WTC11 (cell line): ENCODE measurements at regions of chr1 and their contacts with region 1.

Region 1: DNA sequence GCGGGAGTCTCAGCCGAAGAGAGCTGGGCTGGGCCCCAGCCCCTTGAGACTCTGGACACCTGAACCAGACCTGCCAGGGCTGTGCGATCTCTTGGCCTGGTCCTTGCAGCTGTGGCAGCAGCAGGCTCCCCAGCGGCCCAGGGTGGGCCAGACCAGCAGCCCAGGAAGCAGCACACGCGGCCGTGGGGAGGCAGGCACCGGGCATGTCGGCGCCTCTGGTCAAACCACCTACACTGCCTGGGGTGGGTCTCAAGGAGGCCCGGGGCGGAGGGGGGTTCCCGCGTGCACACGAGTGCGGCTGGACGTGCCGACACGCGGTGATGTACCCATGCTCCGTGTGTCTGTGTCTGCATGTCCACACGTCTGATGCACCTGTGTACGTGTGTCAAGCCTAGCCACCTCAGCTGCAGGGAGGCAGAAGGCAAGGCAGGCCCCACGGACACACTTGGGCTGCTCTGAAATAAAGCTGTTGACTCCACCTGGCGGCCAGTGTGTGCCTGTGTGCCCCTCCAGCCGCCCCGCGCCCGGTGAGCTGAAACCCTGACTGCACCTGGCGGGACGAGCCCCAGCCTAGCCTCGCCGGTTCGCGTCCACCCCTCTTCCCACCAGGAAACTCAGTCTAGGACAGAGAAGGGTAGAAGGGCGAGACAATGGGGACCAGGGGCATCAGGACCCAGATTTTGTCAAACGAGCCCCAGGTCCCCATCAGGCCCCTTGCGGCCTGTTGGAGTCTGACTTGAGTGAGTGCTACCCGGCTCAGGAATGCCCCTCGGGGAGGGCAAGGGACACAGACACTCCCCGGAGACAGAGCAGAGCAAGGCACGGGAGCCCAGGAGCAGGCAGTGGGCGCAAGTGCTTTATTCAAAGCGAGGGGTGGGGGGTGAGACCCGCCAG is 11.6 kb downstream of the SCNN1D start:
- DNase-seq: peak; percentile 85
- ATAC-seq: peak; percentile 68
- H3K4me3 Mint-ChIP-seq: no peak overlapping the region
- H3K27ac Mint-ChIP-seq: peak overlapping the region; percentile 49; the same call in 1 of the 2 replicates
- H3K4me1 Mint-ChIP-seq: peaks cover 4% of the 10 kb centered on the region; the same call in 1 of the 2 replicates
- H3K27me3 Mint-ChIP-seq: no peaks in the 10 kb centered on the region
- CTCF ChIP-seq: peak; percentile 55

Region 2: DNA sequence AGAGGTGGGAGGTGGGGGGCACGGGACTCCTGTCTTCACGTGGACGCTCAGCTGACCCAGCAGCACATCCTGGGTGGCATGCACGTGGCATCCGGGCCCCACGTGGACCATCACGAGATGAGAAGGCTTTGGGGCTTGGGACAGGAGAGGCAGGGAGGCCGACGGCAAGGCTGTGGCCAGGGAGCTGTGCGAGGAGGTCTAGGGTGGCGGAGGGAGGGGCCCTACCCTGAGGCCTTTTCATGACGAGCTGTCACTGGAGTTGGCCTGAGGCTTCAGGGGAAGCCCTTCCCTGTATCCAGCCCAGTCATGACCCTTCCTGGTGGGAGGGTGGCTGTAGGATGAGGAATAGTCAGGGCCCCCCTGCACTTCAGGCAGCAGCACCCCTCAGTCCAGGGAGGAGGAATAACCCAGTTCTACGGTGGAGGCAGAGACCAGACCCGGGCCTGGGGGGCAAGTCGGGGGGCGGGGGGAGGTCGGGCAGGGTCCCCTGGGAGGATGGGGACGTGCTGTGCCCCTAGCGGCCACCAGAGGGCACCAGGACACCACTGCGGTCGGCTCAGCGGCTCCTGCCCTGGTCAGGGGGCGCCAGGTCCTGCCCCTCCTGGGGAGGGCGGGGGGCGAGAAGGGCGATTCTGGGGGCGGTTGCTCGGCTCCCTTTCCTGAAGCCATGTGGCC is 307.9 kb before region 1 on chr1:
- CTCF ChIA-PET with region 1: interaction called, 13 read pairs
- POLR2A ChIA-PET with region 1: no interaction called
- DNase-seq: peak; percentile 85
- ATAC-seq: peak; percentile 92
- H3K4me3 Mint-ChIP-seq: no peak overlapping the region
- H3K27ac Mint-ChIP-seq: no peak overlapping the region
- H3K4me1 Mint-ChIP-seq: no peaks in the 10 kb centered on the region
- H3K27me3 Mint-ChIP-seq: peaks cover 59% of the 10 kb centered on the region
- CTCF ChIP-seq: peak; percentile 98

Region 3: DNA sequence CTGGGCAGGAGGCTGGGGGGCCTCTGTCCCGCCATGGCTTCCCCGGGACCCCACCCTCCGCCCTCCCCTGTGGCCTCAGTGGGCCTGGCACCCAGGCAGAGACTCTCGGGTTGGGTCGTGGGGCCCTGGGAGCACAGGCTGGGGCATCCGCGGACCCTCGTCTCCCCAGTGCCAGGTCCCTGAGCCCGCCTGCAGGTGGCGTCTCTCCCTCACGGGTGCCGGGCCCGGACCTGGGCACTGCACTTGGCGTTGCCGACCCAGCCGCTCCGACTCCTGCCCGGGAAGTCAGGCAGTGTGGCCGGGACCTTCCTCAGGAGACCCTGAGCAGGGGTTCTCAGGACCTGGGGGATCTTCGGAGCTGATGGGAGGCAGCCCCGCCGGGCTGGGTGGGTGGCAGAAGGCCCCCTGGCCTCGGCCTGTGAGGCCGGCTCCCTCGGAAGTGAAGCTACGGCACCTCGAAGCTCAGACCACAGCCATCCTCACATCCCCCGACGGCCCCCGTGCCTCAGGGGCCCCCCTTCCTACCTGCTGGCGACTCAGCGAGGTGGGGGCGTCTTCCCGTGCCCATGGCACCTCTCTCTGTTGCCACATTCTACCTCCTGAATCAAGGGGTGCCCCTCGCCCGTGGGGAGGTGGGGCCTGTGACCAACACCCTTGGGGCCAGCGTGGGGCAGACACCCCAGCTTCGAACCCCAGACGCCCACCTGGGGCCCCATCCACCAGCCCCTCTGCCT is 169.6 kb before region 1 on chr1:
- CTCF ChIA-PET with region 1: interaction called, 20 read pairs
- POLR2A ChIA-PET with region 1: no interaction called
- DNase-seq: peak; percentile 89
- ATAC-seq: peak; percentile 96
- H3K4me3 Mint-ChIP-seq: no peak overlapping the region
- H3K27ac Mint-ChIP-seq: no peak overlapping the region
- H3K4me1 Mint-ChIP-seq: no peaks in the 10 kb centered on the region
- H3K27me3 Mint-ChIP-seq: peaks cover 24% of the 10 kb centered on the region
- CTCF ChIP-seq: peak; percentile 58

Region 4: DNA sequence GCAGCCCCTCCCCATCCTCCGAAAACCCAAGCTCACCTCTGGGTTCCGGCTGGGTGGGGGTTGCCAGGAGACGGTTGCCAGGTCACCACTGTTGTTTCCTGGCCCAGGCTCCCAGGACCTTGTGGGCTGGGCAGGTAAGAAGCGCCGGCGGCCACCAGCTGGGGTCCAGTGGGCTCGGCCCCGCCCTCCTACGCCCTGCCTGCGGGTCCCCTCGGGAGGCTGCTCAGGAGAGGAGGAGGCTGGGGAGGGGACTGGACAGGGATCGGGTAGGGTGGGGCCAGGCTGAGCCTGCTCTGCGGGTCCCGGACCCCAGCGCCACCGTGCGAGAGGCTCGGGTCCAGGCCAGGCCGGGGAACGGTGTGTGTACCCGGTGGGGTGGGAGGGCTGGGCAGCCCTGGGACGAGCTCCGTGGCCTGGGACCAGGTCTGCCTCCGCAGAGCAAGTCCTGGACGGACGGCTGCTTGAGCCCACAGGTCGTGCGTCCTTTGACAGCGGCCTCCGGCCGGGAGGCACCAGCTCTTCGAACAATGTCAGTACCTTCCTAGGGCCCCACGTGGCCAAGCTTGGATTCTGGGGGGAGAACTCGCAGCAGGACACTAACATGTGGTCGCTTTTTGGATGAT is 117.9 kb before region 1 on chr1 and contains the start of gene TTLL10:
- CTCF ChIA-PET with region 1: interaction called, 10 read pairs
- POLR2A ChIA-PET with region 1: no interaction called
- DNase-seq: peak; percentile 82
- ATAC-seq: peak; percentile 72
- H3K4me3 Mint-ChIP-seq: peak within 1 kb of the TSS; percentile 40; the same call in 1 of the 2 replicates
- H3K27ac Mint-ChIP-seq: no peak within 1 kb of the TSS
- H3K4me1 Mint-ChIP-seq: peaks cover 20% of the 10 kb centered on the region
- H3K27me3 Mint-ChIP-seq: peaks cover 19% of the 10 kb centered on the region
- CTCF ChIP-seq: no peak
- total RNA-seq, gene TTLL10: 0.78 to 1.1 TPM (median 1.1 TPM) in 3 replicates

Region 5: GRCh38 chr1:1273512-1274298 is 18.1 kb before region 1 on chr1 and contains the start of gene UBE2J2:
- CTCF ChIA-PET with region 1: interaction called, 25 read pairs
- POLR2A ChIA-PET with region 1: interaction called, 5 read pairs
- DNase-seq: peak; percentile 92
- ATAC-seq: peak; percentile 94
- H3K4me3 Mint-ChIP-seq: peak within 1 kb of the TSS; percentile 84
- H3K27ac Mint-ChIP-seq: peak within 1 kb of the TSS; percentile 63
- H3K4me1 Mint-ChIP-seq: peaks cover 23% of the 10 kb centered on the region
- H3K27me3 Mint-ChIP-seq: no peaks in the 10 kb centered on the region
- CTCF ChIP-seq: no peak
- total RNA-seq, gene UBE2J2: 62.6 to 72.2 TPM (median 65.6 TPM) in 3 replicates

Region 6: DNA sequence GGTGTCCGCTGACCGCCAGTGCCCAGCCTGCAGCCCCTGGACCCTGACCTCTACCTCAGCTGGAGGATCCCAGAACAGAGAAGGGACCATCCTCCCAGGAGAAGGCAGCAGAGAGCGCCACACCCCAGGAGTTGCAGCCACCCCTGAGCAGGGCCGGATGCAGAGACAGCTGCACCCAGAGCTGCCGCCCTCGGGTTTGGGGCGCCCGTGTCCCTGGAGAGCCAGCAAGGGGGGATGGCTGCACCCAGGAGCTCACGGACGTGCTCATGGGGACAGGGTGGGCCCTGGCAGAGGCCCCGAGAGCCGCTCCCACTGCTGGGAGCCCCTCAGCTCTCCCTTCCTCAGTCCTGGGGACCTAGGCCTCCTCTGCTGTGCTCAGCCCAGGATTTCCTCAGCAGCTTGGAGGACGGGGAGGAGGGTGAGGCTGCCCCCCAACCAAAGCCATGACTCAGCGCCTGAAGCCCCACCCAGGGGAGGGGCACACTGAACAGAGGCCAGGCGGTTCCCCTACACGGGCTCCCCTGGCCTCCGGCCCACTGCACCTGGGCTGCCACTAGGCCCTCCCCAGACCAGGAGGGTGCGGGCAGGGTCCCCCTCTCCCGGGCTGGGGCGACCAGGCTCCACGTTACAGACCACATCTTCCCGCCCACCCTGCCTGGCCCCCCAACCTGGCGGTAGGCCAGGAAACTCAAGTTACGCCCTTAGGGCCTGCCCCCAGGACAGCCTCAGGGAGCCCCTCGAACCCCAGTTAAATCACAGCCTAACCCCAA is 13.7 kb after region 1 on chr1:
- CTCF ChIA-PET with region 1: interaction called, 81 read pairs
- POLR2A ChIA-PET with region 1: interaction called, 5 read pairs
- DNase-seq: no peak
- ATAC-seq: peak; percentile 2; the same call in 1 of the 2 replicates
- H3K4me3 Mint-ChIP-seq: peak overlapping the region; percentile 71
- H3K27ac Mint-ChIP-seq: peak overlapping the region; percentile 87
- H3K4me1 Mint-ChIP-seq: peaks cover 21% of the 10 kb centered on the region
- H3K27me3 Mint-ChIP-seq: peaks cover 6% of the 10 kb centered on the region; the same call in 1 of the 2 replicates
- CTCF ChIP-seq: no peak